K562 (cell line): ENCODE measurements at regions of chr2 and their contacts with region 1.

Region 1: DNA sequence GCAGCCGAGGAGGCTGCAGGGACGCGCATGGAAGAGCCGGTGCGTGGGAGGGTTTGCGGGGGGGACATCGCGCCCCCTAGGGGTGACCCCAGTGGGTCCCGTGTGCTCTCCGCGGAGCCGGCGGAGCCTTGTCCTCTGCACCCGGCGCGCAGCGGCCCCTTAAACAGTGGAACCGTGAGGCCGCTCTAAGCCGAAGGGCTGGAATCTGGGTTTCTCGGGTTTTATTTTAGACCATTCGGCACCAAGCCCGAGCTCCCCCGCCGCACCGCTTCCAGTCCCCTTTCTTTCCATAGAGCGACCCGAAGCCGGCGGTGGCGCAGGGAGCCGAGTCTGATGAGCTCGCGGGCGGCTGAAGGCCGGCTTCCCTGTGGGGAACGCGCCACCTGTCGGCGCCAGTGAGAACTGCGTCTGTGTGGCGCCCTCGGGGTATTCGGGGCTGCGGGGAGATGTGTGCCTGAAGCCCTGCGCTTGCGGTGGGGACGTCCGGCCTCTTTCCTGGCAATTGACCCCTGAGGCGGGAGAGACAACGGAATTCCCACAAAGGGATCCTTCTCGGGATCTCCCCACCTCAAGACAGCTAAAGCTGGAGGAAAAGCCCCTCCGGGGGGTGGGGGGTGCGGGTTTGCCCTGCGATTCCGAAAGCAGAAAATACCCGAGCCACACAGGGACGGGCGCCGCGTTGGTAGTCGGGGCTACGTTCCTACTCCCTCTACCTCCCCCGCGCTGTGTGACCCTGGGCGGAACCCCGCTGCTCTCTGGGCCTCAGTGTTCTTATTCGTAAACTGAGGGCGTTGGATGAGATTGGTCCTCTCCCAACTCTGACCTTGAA is 8.2 kb upstream of the EN1 start:
- DNase-seq: peak; percentile 75 to 88 (median 82)
- ATAC-seq: peak; percentile 97
- H3K4me3 ChIP-seq: no peak overlapping the region
- H3K27ac ChIP-seq: no peak overlapping the region
- H3K4me1 ChIP-seq: peaks cover 0 to 22% of the 10 kb centered on the region in 2 experiments; a peak in 2 of 5 replicates
- H3K27me3 ChIP-seq: peaks cover 0 to 26% of the 10 kb centered on the region in 2 experiments; a peak in 2 of 5 replicates
- CTCF ChIP-seq: peak; percentile 81 to 95 (median 87)
- EP300 ChIP-seq: no peak
- POLR2A ChIP-seq: no peak
- RAD21 ChIP-seq: peak; percentile 94 to 95

Region 2: GRCh38 chr2:118221666-118222594 is 633.7 kb before region 1 on chr2:
- CTCF ChIA-PET with region 1: interaction called, 11 read pairs
- POLR2A ChIA-PET with region 1: no interaction called
- in situ Hi-C with region 1: loop called (anchors 5 kb)
- intact Hi-C with region 1: no loop called
- DNase-seq: peak; percentile 46 to 58 (median 51)
- ATAC-seq: peak; percentile 89
- H3K4me3 ChIP-seq: no peak overlapping the region
- H3K27ac ChIP-seq: no peak overlapping the region
- H3K4me1 ChIP-seq: peaks cover 0 to 7% of the 10 kb centered on the region in 2 experiments; a peak in 1 of 5 replicates
- H3K27me3 ChIP-seq: peaks cover 15 to 26% of the 10 kb centered on the region in 2 experiments
- CTCF ChIP-seq: peak; percentile 58 to 77 (median 61); a peak in 5 of 6 replicates
- EP300 ChIP-seq: no peak
- POLR2A ChIP-seq: no peak
- RAD21 ChIP-seq: peak; percentile 72 to 79

Region 3: DNA sequence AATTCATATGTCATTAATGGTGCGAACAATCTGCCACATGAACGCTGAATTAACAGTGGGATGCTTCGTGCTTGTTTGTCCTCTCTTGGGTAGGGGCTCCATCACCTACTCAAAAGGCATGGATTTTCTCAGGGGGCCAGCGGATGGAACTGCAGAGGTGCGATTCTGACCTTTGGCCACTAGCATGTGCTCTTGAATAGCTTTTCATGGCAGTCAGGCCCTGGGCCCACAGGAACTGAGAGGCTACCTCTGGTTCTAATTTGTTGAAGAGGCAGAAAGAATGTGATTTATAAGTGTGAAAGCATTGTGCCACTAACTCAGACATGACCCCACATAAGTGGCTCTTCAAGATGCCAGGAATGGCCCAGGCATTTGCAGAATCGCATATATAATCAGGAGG is 484.1 kb before region 1 on chr2:
- CTCF ChIA-PET with region 1: no interaction called
- POLR2A ChIA-PET with region 1: no interaction called
- in situ Hi-C with region 1: no loop called
- intact Hi-C with region 1: loop called (anchors 1 kb)
- DNase-seq: peak in 2 of 4 experiments; percentile 45 to 46
- ATAC-seq: peak; percentile 84
- H3K4me3 ChIP-seq: no peak overlapping the region
- H3K27ac ChIP-seq: no peak overlapping the region
- H3K4me1 ChIP-seq: no peaks in the 10 kb centered on the region
- H3K27me3 ChIP-seq: peaks cover 0 to 4% of the 10 kb centered on the region in 2 experiments; a peak in 3 of 5 replicates
- CTCF ChIP-seq: peak; percentile 58 to 73 (median 61)
- EP300 ChIP-seq: no peak
- POLR2A ChIP-seq: no peak
- RAD21 ChIP-seq: peak; percentile 55 to 65

Region 4: DNA sequence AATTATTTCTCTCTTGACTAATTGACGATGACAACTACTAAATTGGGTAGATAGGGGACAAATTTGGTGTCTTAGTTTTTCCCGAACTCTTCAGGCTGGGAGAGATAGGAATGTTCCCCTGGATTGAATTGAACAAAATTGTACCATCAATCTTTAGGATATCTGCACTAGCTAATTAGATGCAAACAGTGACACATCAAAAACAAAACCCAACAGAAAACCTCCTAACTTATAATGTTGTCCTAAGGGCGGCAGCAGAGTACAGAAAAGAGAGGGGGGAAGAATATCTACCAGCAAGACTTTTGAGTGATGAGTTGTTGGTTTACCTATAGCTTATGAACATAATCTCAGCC is 424.5 kb before region 1 on chr2:
- CTCF ChIA-PET with region 1: no interaction called
- POLR2A ChIA-PET with region 1: no interaction called
- in situ Hi-C with region 1: no loop called
- intact Hi-C with region 1: loop called (anchors 1 kb)
- DNase-seq: peak in 2 of 4 experiments; percentile 9 to 22
- ATAC-seq: peak; percentile 62; the same call in 2 of the 3 replicates
- H3K4me3 ChIP-seq: no peak overlapping the region
- H3K27ac ChIP-seq: no peak overlapping the region
- H3K4me1 ChIP-seq: no peaks in the 10 kb centered on the region
- H3K27me3 ChIP-seq: peaks cover 0 to 5% of the 10 kb centered on the region in 2 experiments; a peak in 1 of 5 replicates
- CTCF ChIP-seq: peak; percentile 23 to 54 (median 23); a peak in 3 of 6 replicates
- EP300 ChIP-seq: no peak
- POLR2A ChIP-seq: no peak
- RAD21 ChIP-seq: peak; percentile 43 to 60

Region 5: GRCh38 chr2:118539290-118539689 is 316.4 kb before region 1 on chr2:
- CTCF ChIA-PET with region 1: interaction called, 10 read pairs
- POLR2A ChIA-PET with region 1: no interaction called
- in situ Hi-C with region 1: no loop called
- intact Hi-C with region 1: loop called (anchors 5 kb)
- DNase-seq: peak in 2 of 4 experiments; percentile 21 to 32
- ATAC-seq: peak; percentile 75
- H3K4me3 ChIP-seq: no peak overlapping the region
- H3K27ac ChIP-seq: no peak overlapping the region
- H3K4me1 ChIP-seq: no peaks in the 10 kb centered on the region
- H3K27me3 ChIP-seq: peaks cover 0 to 14% of the 10 kb centered on the region in 2 experiments; a peak in 1 of 5 replicates
- CTCF ChIP-seq: peak; percentile 48 to 55 (median 51)
- EP300 ChIP-seq: no peak
- POLR2A ChIP-seq: no peak
- RAD21 ChIP-seq: peak; percentile 30 to 38; a peak in 2 of 4 replicates

Region 6: GRCh38 chr2:118632921-118633320 is 222.7 kb before region 1 on chr2:
- CTCF ChIA-PET with region 1: no interaction called
- POLR2A ChIA-PET with region 1: no interaction called
- in situ Hi-C with region 1: no loop called
- intact Hi-C with region 1: loop called (anchors 5 kb)
- DNase-seq: peak; percentile 11 to 77 (median 74)
- ATAC-seq: peak; percentile 91
- H3K4me3 ChIP-seq: no peak overlapping the region
- H3K27ac ChIP-seq: no peak overlapping the region
- H3K4me1 ChIP-seq: no peaks in the 10 kb centered on the region; a peak in 2 of 5 replicates
- H3K27me3 ChIP-seq: peaks cover 2 to 24% of the 10 kb centered on the region in 2 experiments; a peak in 4 of 5 replicates
- CTCF ChIP-seq: peak in 1 of 3 experiments; percentile 24; a peak in 1 of 6 replicates
- EP300 ChIP-seq: no peak
- POLR2A ChIP-seq: no peak
- RAD21 ChIP-seq: no peak

Region 7: DNA sequence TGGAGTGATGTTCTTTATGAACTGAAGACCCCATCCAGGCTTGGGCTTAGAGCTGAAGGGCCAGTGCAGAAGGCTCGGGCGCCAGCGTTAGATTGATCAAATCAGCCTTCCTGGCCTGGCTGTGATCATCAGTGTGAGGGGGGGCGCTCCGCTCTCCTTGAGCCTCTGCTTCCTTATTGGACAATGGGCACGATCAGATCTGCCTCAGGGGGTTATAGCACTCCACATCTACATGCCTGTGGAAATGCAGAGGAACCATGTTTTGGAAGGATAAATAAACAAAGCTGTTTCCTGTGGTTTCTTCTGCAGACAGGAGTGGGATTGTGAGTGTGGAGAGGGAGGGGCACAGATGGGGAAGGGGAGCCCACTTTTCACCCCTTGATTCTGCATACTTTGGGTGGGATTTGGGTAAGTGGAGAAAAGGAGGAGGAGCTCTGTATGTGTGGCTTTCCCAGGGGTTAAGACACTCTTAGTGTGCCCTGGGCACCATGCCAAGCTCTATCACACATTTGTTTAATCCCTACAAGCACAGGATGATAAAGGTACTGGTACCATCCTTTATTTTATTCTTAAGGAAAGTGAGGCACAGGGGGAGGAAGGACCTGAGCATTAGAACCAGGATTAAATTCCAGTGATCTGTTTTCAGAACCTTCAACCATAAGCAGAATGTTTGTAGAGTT is 158.7 kb before region 1 on chr2:
- CTCF ChIA-PET with region 1: no interaction called
- POLR2A ChIA-PET with region 1: no interaction called
- in situ Hi-C with region 1: no loop called
- intact Hi-C with region 1: no loop called
- DNase-seq: no peak
- ATAC-seq: peak; percentile 58
- H3K4me3 ChIP-seq: no peak overlapping the region
- H3K27ac ChIP-seq: no peak overlapping the region
- H3K4me1 ChIP-seq: peaks cover 0 to 5% of the 10 kb centered on the region in 2 experiments; a peak in 3 of 5 replicates
- H3K27me3 ChIP-seq: no peaks in the 10 kb centered on the region
- CTCF ChIP-seq: no peak
- EP300 ChIP-seq: no peak
- POLR2A ChIP-seq: no peak
- RAD21 ChIP-seq: no peak